Gastrocnemius medialis (tissue), 4 donors: ENCODE measurements at regions of chr4 and their contacts with region 1.

Region 1: DNA sequence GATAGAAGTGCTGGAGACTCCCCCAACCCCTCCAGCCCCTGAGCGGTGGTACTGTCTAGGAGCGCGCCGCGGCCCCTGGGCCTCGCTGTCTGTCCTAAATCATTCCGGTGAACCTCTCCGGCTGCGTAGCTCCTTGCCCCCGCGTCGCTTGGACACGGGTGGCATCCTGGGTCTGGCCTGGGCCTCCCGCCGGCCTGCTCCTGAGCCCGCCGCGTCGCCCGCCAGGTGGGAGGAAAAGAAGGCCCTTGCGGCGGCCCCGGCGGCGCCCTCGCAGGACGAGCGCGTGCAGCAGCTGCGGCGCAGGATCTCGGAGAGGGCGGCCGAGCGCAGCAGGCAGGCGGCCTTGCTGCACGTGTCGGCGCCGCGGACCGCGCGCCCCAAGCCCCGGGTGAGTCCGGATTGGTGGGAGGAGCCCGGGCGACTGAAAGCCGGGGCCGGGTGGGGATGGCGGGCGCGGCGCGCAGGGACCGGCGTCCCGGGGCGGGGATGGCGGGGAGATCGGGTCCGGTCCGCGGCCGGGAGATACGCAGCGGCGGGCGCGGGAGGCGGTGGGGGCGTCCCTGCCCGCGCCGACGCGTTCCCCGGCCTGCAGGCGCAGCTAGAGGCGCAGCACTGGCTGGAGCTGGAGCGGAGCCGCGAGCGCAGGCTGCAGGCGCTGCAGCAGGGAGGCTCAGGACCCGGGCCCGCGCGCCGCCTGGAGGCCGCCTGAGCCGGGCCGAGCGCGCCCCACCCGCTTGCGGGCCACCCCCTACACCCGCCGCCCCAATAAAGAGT is 6.5 kb upstream of the RNF4 start:
- DNase-seq: peak; percentile 38 to 46
- ATAC-seq: peak; percentile 81 to 86
- H3K4me3 ChIP-seq: peak overlapping the region; percentile 34 to 73 (median 58)
- H3K27ac ChIP-seq: peak overlapping the region in 3 of 4 donors; percentile 34 to 37 (median 35)
- H3K4me1 ChIP-seq: peaks cover 5 to 8% of the 10 kb centered on the region in 2 donors
- H3K27me3 ChIP-seq: no peaks in the 10 kb centered on the region
- CTCF ChIP-seq: peak in 4 of 5 experiments; percentile 36 to 78 (median 62)
- POLR2A ChIP-seq: no peak

Region 2: GRCh38 chr4:2241410-2242353 is 220.7 kb before region 1 on chr4 and contains the starts of genes HAUS3 and POLN:
- in situ Hi-C with region 1: no loop called
- intact Hi-C with region 1: loop called (anchors 2 kb)
- DNase-seq: peak; percentile 96 to 97
- ATAC-seq: peak; percentile 97 to 98
- H3K4me3 ChIP-seq: peak within 1 kb of the TSS; percentile 88 to 98 (median 92)
- H3K27ac ChIP-seq: peak within 1 kb of the TSS; percentile 75 to 86 (median 82)
- H3K4me1 ChIP-seq: peaks cover 34 to 39% of the 10 kb centered on the region in 2 donors
- H3K27me3 ChIP-seq: no peaks in the 10 kb centered on the region
- CTCF ChIP-seq: no peak
- POLR2A ChIP-seq: peak; percentile 74 to 86
- total RNA-seq, gene HAUS3: 4.8 to 12.1 (median 9.5) TPM
- total RNA-seq, gene POLN: 0.71 to 2.0 (median 0.86) TPM in 3 of 4 donors, not detected in the other

Region 3: DNA sequence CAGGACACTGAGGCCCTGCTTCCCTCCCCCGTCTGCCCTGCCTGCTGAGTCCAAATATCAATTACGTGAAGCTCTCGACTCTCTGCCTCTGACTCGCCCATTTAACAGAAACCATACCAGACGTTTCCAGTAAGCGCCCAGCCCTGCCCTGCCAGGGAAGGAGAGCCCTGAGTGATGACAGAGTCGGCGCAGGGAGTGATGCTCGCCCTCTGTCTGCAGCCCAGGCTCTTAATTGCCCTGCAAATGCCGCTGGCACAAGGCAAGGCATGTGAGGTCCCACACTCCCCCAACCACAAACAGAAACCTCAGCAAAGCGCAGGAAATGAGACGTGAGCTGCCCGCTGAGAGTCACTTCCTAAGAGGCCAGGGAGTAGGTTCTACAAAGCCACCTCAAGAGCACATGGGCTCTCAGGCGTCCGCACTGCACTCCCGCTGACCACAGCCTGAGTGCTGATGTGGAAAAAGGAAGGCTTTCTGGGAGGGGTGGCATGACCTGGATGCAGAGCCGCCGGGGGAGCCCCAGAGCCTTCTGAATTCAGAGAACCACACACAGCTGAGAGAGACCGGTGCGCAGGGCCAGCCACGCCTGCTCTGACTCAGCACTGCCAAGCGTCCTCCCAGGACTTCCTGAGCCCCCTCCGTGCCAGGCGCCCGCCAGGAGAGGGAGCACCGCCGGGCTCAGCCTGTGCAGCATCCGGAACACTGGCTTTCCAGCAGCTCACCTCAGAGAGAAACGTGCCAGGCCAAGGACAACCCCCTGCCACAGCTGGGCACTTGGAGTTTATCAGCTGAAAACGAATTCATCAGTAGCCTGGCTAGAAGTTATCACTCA is 49.3 kb before region 1 on chr4:
- in situ Hi-C with region 1: no loop called
- intact Hi-C with region 1: loop called (anchors 1 kb)
- DNase-seq: peak; percentile 66 to 82
- ATAC-seq: peak; percentile 70 to 87
- H3K4me3 ChIP-seq: peak overlapping the region in 3 of 4 donors; percentile 17 to 42 (median 34)
- H3K27ac ChIP-seq: peak overlapping the region; percentile 54 to 73 (median 61)
- H3K4me1 ChIP-seq: peaks cover 26 to 42% of the 10 kb centered on the region in 2 donors
- H3K27me3 ChIP-seq: peaks cover 0 to 15% (median 0%) of the 10 kb centered on the region in 3 donors
- CTCF ChIP-seq: peak; percentile 9 to 64 (median 49)
- POLR2A ChIP-seq: peak in 1 of 2 donors; percentile 6